ENCODE measurements at regions of chr1 and their contacts with region 1.

Region 1: DNA sequence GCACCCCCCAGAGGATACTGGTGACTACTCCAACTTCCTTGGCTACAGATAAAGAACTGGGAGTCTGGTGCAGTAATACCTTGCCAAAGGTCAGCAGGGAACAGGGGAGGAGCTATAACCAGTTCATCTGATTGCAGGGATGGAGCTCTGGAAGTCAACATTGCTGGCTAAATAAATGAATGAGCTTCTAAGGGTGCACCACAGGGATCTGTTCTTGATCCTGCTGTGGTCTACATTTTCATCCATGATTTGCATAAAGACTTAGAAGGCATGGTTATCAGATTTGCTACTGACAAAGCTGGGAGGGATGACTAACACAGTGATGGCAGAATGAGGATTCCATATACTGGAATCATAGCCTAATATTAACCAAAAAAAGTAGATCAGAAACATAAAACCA is 18.3 kb downstream of the PLEKHA6 start:
- DNase-seq: no peak
- H3K4me3 ChIP-seq: no peak overlapping the region
- H3K27ac ChIP-seq: no peak overlapping the region
- H3K4me1 ChIP-seq: peaks cover 17 to 36% (median 32%) of the 10 kb centered on the region in 4 experiments
- H3K27me3 ChIP-seq: peaks cover 0 to 2% (median 0%) of the 10 kb centered on the region in 4 experiments; a peak in 3 of 7 replicates
- CTCF ChIP-seq: no peak
- EP300 ChIP-seq: no peak
- POLR2A ChIP-seq: no peak
- RAD21 ChIP-seq: no peak

Region 2: DNA sequence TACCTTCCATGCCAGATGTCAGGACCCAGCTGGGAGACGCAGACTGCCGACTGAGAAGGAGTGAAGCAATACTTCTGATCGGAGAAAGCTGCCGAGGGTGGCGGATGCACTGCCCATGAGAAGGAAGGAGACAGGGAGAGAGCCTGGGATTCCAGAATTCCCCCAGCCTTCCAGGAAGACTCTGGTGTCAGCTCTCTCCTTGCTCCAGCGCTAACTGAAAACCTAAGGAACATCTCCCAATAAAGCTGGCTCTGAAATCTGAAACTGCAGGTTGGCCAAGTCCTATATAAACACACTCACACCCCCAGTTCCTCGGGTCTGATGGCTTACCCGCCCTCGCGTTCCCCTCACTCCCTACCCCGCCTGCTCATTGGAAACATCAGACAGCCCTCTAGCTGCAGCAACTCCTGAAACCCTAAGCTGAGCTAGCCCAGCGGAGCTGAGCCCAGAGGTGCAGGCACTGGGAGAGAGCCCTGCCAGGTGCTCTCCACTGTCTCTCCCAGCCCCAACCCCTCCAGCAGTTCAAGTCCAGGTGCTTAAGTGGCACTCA is 34.0 kb before region 1 on chr1:
- CTCF ChIA-PET with region 1: interaction called, 12 read pairs
- POLR2A ChIA-PET with region 1: interaction called, 3 read pairs
- DNase-seq: peak in 1 of 2 experiments; percentile 81
- H3K4me3 ChIP-seq: peak overlapping the region; percentile 19 to 48 (median 38); a peak in 6 of 8 replicates
- H3K27ac ChIP-seq: no peak overlapping the region
- H3K4me1 ChIP-seq: peaks cover 10 to 40% (median 20%) of the 10 kb centered on the region in 4 experiments
- H3K27me3 ChIP-seq: no peaks in the 10 kb centered on the region; a peak in 1 of 7 replicates
- CTCF ChIP-seq: peak in 1 of 3 experiments; percentile 19; a peak in 2 of 4 replicates
- EP300 ChIP-seq: no peak
- POLR2A ChIP-seq: no peak
- RAD21 ChIP-seq: peak; percentile 13 to 50; a peak in 2 of 4 replicates

Region 3: DNA sequence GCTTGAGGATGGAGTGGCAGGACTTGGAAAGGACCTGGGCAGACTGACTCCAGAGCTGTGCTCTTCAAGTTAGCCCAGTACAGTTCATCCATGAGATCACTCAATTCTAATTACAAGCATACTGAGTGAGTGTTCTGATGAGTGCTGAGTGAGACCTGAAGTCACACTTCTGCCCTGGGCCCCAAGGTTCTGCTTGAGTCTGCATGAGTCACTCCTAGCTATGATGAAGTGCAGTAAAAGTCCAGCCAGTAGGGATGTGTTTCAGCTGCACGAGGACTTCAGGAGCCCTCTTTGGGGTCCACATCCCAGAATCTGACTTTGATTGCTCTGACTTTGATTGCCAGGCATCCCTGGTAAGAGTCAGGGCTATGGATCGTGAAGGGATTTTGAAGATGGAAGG is 17.5 kb before region 1 on chr1:
- CTCF ChIA-PET with region 1: interaction called, 11 read pairs
- POLR2A ChIA-PET with region 1: interaction called, 7 read pairs
- DNase-seq: no peak
- H3K4me3 ChIP-seq: no peak overlapping the region
- H3K27ac ChIP-seq: no peak overlapping the region
- H3K4me1 ChIP-seq: peaks cover 0 to 9% (median 4%) of the 10 kb centered on the region in 4 experiments; a peak in 6 of 7 replicates
- H3K27me3 ChIP-seq: no peaks in the 10 kb centered on the region
- CTCF ChIP-seq: no peak
- EP300 ChIP-seq: no peak
- POLR2A ChIP-seq: no peak
- RAD21 ChIP-seq: no peak

Measured in H1 (cell line).